PC-3 (cell line): ENCODE measurements at regions of chr6 and their contacts with region 1.

Region 1: GRCh38 chr6:108896111-108896661 is 48.0 kb downstream of the ARMC2 start:
- DNase-seq: peak; percentile 38
- ATAC-seq: peak; percentile 31; the same call in 1 of the 2 replicates
- H3K4me3 ChIP-seq: no peak overlapping the region
- H3K27ac ChIP-seq: no peak overlapping the region
- H3K4me1 ChIP-seq: peaks cover 12% of the 10 kb centered on the region
- H3K27me3 ChIP-seq: no peaks in the 10 kb centered on the region
- CTCF ChIP-seq: no peak

Region 2: DNA sequence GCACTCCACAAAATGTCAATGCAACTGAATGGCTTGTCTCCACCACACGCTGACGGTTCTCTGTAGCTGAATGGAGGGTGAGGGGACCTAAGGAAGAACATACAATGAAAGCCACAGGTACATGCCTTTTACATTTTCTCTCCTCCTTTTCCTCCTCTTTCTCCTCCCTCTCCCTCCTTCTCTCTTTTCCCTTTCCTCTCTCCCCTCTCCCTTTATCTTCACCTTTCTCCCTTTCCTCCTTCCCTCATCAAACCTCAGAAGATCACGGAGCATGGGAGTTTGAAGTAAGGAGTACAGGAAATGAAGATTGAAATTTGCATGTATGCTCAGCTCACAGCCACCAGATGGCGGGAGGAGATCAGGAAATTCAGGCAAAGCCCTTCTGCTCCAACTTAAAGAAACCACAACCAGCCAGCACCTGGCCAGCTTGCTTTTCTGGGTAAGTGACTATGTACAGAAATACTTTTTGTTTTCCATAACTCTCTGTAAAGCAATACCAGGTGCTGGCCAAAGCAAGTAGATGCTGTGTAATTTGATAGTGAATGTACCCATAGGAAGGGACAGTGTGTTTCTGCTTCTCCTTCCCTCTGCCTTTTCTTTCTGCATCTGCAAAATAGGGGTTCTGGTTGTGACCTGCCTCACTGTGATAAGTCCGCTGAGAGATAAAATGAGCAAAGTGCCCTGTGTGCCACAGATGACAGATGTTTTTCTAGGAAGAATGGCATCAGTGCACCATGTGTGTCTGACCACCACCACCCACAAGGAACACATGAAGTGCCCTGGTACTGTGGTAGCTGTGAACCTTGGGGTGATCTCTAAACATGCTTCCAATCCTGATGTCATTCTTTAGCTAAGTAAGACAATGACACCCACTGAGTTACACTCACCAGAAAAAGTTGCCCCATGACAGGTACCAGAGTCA is 354.1 kb before region 1 on chr6:
- CTCF ChIA-PET with region 1: interaction called, 20 read pairs
- POLR2A ChIA-PET with region 1: no interaction called
- intact Hi-C with region 1: loop called (anchors 1 kb)
- DNase-seq: peak; percentile 76
- ATAC-seq: peak; percentile 71
- H3K4me3 ChIP-seq: peak overlapping the region; percentile 40; the same call in 1 of the 2 replicates
- H3K27ac ChIP-seq: no peak overlapping the region
- H3K4me1 ChIP-seq: 0 out of 2 replicates have a peak, but pooled peaks cover 4% of the 10 kb centered on the region
- H3K27me3 ChIP-seq: no peaks in the 10 kb centered on the region
- CTCF ChIP-seq: peak; percentile 85

Region 3: GRCh38 chr6:108748055-108748454 is 148.1 kb before region 1 on chr6:
- CTCF ChIA-PET with region 1: no interaction called
- POLR2A ChIA-PET with region 1: no interaction called
- intact Hi-C with region 1: no loop called
- DNase-seq: peak; percentile 56
- ATAC-seq: no peak
- H3K4me3 ChIP-seq: no peak overlapping the region
- H3K27ac ChIP-seq: peak overlapping the region; percentile 42
- H3K4me1 ChIP-seq: peaks cover 55% of the 10 kb centered on the region
- H3K27me3 ChIP-seq: no peaks in the 10 kb centered on the region
- CTCF ChIP-seq: no peak

Region 4: DNA sequence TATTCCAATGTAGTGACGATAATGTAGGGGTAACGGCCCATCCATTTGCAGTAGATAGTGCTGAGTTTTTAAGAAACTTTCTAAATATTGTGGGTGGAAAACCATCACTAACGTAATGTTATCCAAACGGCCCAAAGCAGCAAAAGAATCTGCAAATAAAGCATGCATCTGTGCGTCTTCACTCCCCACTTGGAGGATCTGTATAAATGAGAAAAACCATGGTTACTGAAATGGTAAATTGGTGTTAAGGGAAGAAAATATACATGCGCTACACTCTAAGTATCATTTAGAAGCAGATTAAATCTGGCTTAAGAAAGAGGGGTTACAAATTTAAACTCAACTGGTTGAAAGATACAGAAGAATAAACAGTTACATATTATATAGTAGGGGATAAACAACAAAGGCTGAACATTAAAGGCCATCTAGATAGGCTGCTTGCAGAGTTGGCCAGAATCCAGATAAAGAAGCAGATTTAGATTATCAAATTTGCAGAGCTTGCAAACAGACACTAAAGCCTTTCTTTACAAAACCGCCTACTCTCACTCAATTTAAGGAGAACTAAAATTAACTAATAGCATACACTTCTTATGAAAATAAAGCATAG is 105.2 kb after region 1 on chr6:
- CTCF ChIA-PET with region 1: no interaction called
- POLR2A ChIA-PET with region 1: no interaction called
- intact Hi-C with region 1: no loop called
- DNase-seq: no peak
- ATAC-seq: no peak
- H3K4me3 ChIP-seq: no peak overlapping the region
- H3K27ac ChIP-seq: no peak overlapping the region
- H3K4me1 ChIP-seq: peaks cover 3% of the 10 kb centered on the region
- H3K27me3 ChIP-seq: no peaks in the 10 kb centered on the region
- CTCF ChIP-seq: no peak